SK-N-SH (cell line): ENCODE measurements at regions of chr9 and their contacts with region 1.

Region 1: DNA sequence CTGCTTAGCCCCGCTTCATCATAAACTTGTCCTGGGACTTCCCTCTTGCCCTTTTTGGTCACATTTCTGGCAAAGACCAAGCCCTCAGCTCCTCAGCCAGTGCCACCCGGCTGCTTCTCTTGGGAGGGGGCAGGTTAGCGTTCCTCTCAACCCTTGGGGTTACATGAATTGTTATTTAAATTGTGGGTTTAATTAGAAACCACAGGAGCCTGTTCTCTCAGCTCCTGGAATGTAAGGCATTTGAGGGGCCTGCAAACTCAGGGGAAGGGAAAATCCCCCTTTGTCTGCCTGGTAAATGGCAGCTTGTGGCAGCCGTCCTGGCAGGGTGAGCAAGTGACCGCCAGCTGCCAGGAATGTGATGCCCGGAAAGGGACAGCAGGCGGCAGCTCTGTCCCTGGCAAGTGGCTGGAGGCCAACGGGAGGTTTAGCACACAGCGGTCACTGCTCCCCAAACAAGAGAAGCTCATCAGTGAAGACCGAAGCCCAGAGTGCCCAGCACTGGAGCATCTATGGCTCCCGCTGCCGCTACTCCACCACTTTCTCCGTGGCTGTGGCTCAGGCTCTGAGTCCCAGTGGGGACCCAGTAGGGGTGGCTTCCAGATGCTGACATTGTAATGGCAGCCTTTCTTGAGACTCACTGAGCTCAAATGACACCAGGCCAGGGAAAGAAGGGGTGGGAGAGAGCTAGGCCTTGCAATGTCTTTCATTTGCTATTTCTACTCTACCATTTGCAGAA is 51.7 kb downstream of the SHB start:
- DNase-seq: peak; percentile 80
- H3K4me3 ChIP-seq: no peak overlapping the region
- H3K27ac ChIP-seq: peak overlapping the region; percentile 97 to 99
- H3K4me1 ChIP-seq: peaks cover 53 to 61% of the 10 kb centered on the region in 2 experiments
- H3K27me3 ChIP-seq: no peaks in the 10 kb centered on the region
- CTCF ChIP-seq: peak; percentile 45
- EP300 ChIP-seq: peak in 1 of 2 experiments; percentile 43; a peak in 1 of 4 replicates
- RAD21 ChIP-seq: peak; percentile 87

Region 2: GRCh38 chr9:37840560-37841194 is 176.6 kb before region 1 on chr9:
- CTCF ChIA-PET with region 1: no interaction called
- POLR2A ChIA-PET with region 1: no interaction called
- DNase-seq: no peak
- H3K4me3 ChIP-seq: no peak overlapping the region
- H3K27ac ChIP-seq: peak overlapping the region in 1 of 2 experiments; percentile 56; a peak in 2 of 4 replicates
- H3K4me1 ChIP-seq: peaks cover 4 to 6% of the 10 kb centered on the region in 2 experiments; a peak in 3 of 4 replicates
- H3K27me3 ChIP-seq: no peaks in the 10 kb centered on the region
- CTCF ChIP-seq: no peak
- EP300 ChIP-seq: no peak
- RAD21 ChIP-seq: no peak

Region 3: GRCh38 chr9:37938121-37938891 is 79.0 kb before region 1 on chr9:
- CTCF ChIA-PET with region 1: interaction called, 17 read pairs
- POLR2A ChIA-PET with region 1: interaction called, 6 read pairs
- DNase-seq: peak; percentile 79
- H3K4me3 ChIP-seq: peak overlapping the region; percentile 25 to 29; a peak in 2 of 4 replicates
- H3K27ac ChIP-seq: peak overlapping the region; percentile 94 to 100
- H3K4me1 ChIP-seq: peaks cover 52 to 90% of the 10 kb centered on the region in 2 experiments
- H3K27me3 ChIP-seq: no peaks in the 10 kb centered on the region
- CTCF ChIP-seq: 0 out of 2 replicates have a peak, but pooled peaks have one; percentile 13
- EP300 ChIP-seq: peak; percentile 62 to 66
- RAD21 ChIP-seq: peak; percentile 1; the same call in 1 of the 2 replicates

Region 4: GRCh38 chr9:37994639-37995347 is 22.5 kb before region 1 on chr9:
- CTCF ChIA-PET with region 1: interaction called, 38 read pairs
- POLR2A ChIA-PET with region 1: no interaction called
- DNase-seq: peak; percentile 58
- H3K4me3 ChIP-seq: peak overlapping the region in 1 of 2 experiments; percentile 3; a peak in 1 of 4 replicates
- H3K27ac ChIP-seq: peak overlapping the region; percentile 75 to 97
- H3K4me1 ChIP-seq: peaks cover 48 to 70% of the 10 kb centered on the region in 2 experiments; a peak in 3 of 4 replicates
- H3K27me3 ChIP-seq: no peaks in the 10 kb centered on the region
- CTCF ChIP-seq: no peak
- EP300 ChIP-seq: peak; percentile 34 to 77; a peak in 2 of 4 replicates
- RAD21 ChIP-seq: peak; percentile 37

Region 5: DNA sequence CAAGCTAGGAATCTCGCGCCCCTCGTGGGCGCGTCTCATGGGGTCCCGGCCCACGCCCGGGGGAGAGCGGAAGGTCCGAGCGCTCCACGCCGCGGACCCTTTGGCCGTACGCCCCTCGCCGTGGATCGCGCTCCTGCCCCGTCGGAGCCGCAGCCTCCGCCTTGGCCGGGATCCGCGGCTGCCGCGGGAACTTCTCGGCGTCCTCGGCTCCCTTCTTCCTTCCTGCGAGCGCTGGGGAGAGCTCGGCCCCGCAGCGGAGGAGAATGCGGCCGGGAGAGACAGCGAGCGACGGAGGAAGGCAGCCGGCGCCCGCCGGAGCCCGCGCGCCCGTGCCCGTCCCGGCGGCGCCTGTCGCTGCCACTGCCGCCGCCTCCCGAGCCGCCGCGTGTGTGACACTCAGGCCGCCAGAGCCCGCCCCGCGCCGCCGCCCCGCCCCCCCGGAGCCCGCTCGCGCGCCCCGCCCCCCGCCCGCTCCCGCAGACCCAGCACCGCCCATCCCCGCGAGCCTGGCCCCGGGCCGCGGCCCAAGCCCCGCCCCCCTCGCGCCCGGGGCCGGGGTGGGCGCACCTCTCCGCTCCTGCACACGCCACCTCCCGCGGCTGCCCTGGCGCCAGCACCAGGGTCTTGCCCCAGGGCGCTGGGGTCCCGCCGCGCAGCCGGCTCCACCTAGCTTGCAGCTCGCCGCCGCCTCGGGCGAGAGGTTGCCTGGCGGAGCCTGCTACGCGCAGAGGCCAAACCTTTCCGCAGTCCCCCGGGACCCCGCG is 51.7 kb after region 1 on chr9 and contains the start of gene SHB:
- CTCF ChIA-PET with region 1: interaction called, 15 read pairs
- POLR2A ChIA-PET with region 1: interaction called, 7 read pairs
- DNase-seq: peak; percentile 95
- H3K4me3 ChIP-seq: peak within 1 kb of the TSS; percentile 76 to 78
- H3K27ac ChIP-seq: peak within 1 kb of the TSS; percentile 79 to 91
- H3K4me1 ChIP-seq: peaks cover 21 to 49% of the 10 kb centered on the region in 2 experiments; a peak in 3 of 4 replicates
- H3K27me3 ChIP-seq: no peaks in the 10 kb centered on the region
- CTCF ChIP-seq: peak; percentile 54
- EP300 ChIP-seq: no peak
- RAD21 ChIP-seq: no peak
- polyA plus RNA-seq, gene SHB: 20.5 and 26.0 TPM in 2 replicates

Region 6: GRCh38 chr9:38133595-38133994 is 116.3 kb after region 1 on chr9:
- CTCF ChIA-PET with region 1: no interaction called
- POLR2A ChIA-PET with region 1: no interaction called
- DNase-seq: no peak
- H3K4me3 ChIP-seq: no peak overlapping the region
- H3K27ac ChIP-seq: no peak overlapping the region
- H3K4me1 ChIP-seq: no peaks in the 10 kb centered on the region; a peak in 1 of 4 replicates
- H3K27me3 ChIP-seq: peaks cover 12% of the 10 kb centered on the region; the same call in 1 of the 2 replicates
- CTCF ChIP-seq: no peak
- EP300 ChIP-seq: no peak
- RAD21 ChIP-seq: no peak

Region 7: GRCh38 chr9:38362852-38363593 is 345.7 kb after region 1 on chr9:
- CTCF ChIA-PET with region 1: interaction called, 20 read pairs
- POLR2A ChIA-PET with region 1: no interaction called
- DNase-seq: peak; percentile 70
- H3K4me3 ChIP-seq: no peak overlapping the region; a peak in 1 of 4 replicates
- H3K27ac ChIP-seq: peak overlapping the region in 1 of 2 experiments; percentile 17; a peak in 1 of 4 replicates
- H3K4me1 ChIP-seq: peaks cover 0 to 27% of the 10 kb centered on the region in 2 experiments; a peak in 2 of 4 replicates
- H3K27me3 ChIP-seq: no peaks in the 10 kb centered on the region
- CTCF ChIP-seq: peak; percentile 76
- EP300 ChIP-seq: no peak
- RAD21 ChIP-seq: peak; percentile 98